Right cardiac atrium (tissue), 5 donors: ENCODE measurements at regions of chr17 and their contacts with region 1.

Region 1: GRCh38 chr17:48878918-48879898 is 13.4 kb upstream of the ATP5MC1 start:
- DNase-seq: no peak
- ATAC-seq: peak; percentile 74 to 84
- H3K4me3 ChIP-seq: no peak overlapping the region
- H3K27ac ChIP-seq: no peak overlapping the region
- H3K4me1 ChIP-seq: no peaks in the 10 kb centered on the region
- H3K27me3 ChIP-seq: no peaks in the 10 kb centered on the region

Region 2: DNA sequence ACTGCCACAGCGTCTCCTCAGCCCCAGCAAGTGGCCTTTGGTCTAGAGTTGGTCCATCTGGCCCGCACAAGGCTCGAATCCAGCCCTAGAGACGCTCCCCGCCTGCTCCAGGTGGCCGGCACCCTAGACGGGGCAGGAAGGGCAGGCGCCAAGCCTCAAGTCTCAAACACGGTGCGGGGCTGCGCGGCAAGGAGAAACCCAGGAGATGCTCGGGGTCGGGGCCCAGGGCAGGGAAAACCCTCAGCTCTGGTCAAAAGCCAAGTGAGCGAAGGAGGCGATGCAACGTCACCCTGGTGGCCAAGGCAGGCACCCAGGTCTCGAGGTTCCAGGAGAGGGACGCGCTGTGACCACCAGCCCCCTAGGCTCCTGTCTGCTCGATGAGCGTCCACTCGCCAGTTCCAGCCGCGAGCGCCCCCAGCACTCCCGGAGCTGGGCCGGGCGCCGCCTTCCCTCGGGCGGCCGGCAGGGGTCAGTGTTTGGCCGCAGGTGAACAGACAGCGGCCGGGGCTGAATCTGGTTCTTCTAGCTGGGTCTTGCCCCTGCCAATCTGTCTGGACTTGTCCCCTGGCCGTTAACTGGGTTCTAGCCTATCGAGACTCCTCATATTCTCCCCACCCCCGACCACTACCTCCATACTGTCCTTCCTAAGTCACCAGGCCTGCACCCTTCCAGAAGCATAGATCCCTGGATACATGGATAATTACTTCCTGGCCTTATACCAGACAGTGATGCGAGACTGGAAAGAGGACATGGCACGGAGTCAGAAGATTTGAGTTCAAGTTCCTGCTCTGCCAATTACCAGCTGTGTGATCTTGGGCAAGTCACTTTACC is 200.9 kb before region 1 on chr17:
- intact Hi-C with region 1: loop called (anchors 5 to 10 kb)
- DNase-seq: peak; percentile 51 to 84 (median 82)
- ATAC-seq: peak; percentile 80 to 83
- H3K4me3 ChIP-seq: no peak overlapping the region
- H3K27ac ChIP-seq: no peak overlapping the region
- H3K4me1 ChIP-seq: no peaks in the 10 kb centered on the region
- H3K27me3 ChIP-seq: peaks cover 3% of the 10 kb centered on the region

Region 3: GRCh38 chr17:48724251-48725003 is 154.8 kb before region 1 on chr17:
- intact Hi-C with region 1: loop called in 2 of 4 experiments (anchors 10 kb)
- DNase-seq: peak; percentile 88 to 95 (median 92)
- ATAC-seq: peak; percentile 82 to 89
- H3K4me3 ChIP-seq: no peak overlapping the region
- H3K27ac ChIP-seq: no peak overlapping the region
- H3K4me1 ChIP-seq: no peaks in the 10 kb centered on the region
- H3K27me3 ChIP-seq: no peaks in the 10 kb centered on the region

Region 4: DNA sequence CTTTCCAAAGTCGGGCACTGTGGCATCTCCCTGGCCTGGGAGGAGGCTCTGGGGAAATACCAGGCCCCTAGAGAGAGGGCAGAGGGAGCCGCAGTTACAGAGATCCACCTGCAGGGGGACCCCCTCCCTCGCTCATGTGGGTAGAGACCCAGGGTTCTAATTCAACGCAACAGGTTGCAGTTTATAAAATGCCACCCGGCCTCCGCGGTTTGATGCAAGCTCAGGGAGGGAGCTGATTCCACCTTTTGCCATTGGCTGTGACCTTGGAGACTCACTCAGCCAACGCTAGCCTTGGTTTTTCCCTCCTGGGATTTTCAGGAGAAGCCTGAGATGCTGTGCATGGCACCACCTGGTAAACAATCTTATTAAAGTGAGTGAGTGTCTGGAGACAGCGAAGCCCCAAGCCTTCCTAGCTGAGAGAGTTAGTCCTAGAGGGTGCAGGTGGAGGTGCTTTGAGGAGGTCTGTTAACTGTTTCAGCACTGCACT is 74.2 kb before region 1 on chr17:
- intact Hi-C with region 1: loop called in 3 of 4 experiments (anchors 2 kb)
- DNase-seq: peak; percentile 35 to 76 (median 74)
- ATAC-seq: peak; percentile 85 to 88
- H3K4me3 ChIP-seq: no peak overlapping the region
- H3K27ac ChIP-seq: no peak overlapping the region
- H3K4me1 ChIP-seq: no peaks in the 10 kb centered on the region
- H3K27me3 ChIP-seq: no peaks in the 10 kb centered on the region

Region 5: DNA sequence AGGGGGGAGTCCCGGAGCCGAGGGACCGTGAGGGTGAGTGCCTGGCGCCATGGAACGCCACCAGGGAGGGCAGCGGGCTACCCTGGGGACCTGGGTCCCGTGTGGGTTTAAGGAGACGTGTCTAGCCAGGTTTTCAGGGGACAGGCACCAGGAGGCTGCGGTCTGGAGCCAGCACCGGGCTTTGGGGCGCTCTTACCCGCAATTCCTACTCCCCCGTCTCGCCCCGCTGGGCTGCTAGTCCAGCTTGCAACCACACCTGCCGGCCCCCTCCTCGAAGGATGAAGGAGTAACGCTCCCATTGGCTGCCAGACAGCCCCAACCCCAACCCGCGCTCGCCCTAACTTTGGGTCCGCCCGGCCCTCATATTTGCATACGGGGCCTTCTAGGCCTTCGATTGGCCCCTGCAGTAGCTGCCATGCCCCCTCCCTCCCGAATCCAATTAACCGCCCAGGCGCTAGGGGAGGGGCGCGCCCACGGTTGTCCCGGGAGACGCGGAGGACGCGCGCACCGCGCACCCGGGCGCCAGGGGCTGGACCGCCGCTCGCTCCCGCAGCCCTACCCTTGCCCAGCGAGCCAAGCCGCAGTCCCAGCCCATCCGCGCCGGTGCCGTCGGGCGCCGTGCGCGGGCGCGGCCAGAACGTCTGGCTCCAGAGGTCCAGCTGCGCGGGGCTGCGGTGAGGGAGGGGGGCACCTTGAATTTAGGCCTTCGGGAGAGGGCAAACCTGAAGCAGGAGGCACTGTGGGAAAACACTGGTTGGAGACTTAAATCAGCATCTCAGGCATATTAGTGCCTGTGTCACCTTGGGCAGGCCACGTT is 62.2 kb before region 1 on chr17 and contains the start of gene TTLL6:
- intact Hi-C with region 1: loop called (anchors 2 to 5 kb)
- DNase-seq: peak; percentile 89 to 94 (median 94)
- ATAC-seq: peak; percentile 98 to 99
- H3K4me3 ChIP-seq: peak within 1 kb of the TSS; percentile 37
- H3K27ac ChIP-seq: no peak within 1 kb of the TSS
- H3K4me1 ChIP-seq: no peaks in the 10 kb centered on the region
- H3K27me3 ChIP-seq: no peaks in the 10 kb centered on the region
- total RNA-seq, gene TTLL6: 0.06 to 0.23 TPM in 2 of 4 donors, not detected in the others